Dorsolateral prefrontal cortex (tissue), 120 donors: ENCODE measurements at regions of chr15 and their contacts with region 1.

Region 1: GRCh38 chr15:48096813-48097212 is 24.0 kb upstream of the SLC24A5 start:
- DNase-seq: peak in 3 of 10 donors; percentile 7 to 40 (median 24)
- H3K4me3 ChIP-seq: no peak overlapping the region
- H3K27ac ChIP-seq: no peak overlapping the region
- H3K27me3 ChIP-seq: peaks cover 0 to 3% (median 0%) of the 10 kb centered on the region in 45 donors
- CTCF ChIP-seq: no peak

Region 2: GRCh38 chr15:47885921-47886320 is 210.9 kb before region 1 on chr15:
- intact Hi-C with region 1: no loop called
- DNase-seq: no peak
- H3K4me3 ChIP-seq: no peak overlapping the region
- H3K27ac ChIP-seq: no peak overlapping the region
- H3K27me3 ChIP-seq: peaks cover 0 to 9% (median 0%) of the 10 kb centered on the region in 45 donors
- CTCF ChIP-seq: no peak

Region 3: GRCh38 chr15:48076454-48076853 is 20.4 kb before region 1 on chr15:
- intact Hi-C with region 1: loop called in 1 of 2 experiments (anchors 2 kb)
- DNase-seq: no peak
- H3K4me3 ChIP-seq: no peak overlapping the region
- H3K27ac ChIP-seq: no peak overlapping the region
- H3K27me3 ChIP-seq: peaks cover 0 to 7% (median 0%) of the 10 kb centered on the region in 45 donors
- CTCF ChIP-seq: no peak

Region 4: DNA sequence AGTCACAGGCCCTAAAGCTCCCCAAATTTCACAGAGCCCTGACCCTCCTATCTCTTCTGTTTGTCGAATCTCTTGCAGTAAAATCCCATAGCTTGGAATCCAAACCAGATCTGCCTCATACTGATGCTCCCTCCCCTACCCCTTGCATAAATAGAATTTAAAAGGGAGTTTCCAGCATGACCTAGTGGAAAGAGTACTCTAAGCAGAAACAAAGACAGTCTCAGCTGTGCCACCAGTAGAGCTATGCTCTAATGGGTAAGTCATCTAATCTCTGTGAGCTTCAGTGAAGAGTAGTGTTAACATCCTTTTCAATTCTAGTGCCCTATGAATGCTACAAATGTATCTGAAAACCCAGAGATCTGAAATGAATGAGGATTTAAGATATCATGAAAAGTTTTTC is 105.3 kb after region 1 on chr15:
- intact Hi-C with region 1: no loop called
- DNase-seq: no peak
- H3K4me3 ChIP-seq: no peak overlapping the region
- H3K27ac ChIP-seq: no peak overlapping the region
- H3K27me3 ChIP-seq: no peaks in the 10 kb centered on the region
- CTCF ChIP-seq: no peak